HepG2 (cell line): ENCODE measurements at regions of chr6 and their contacts with region 1.

Region 1: DNA sequence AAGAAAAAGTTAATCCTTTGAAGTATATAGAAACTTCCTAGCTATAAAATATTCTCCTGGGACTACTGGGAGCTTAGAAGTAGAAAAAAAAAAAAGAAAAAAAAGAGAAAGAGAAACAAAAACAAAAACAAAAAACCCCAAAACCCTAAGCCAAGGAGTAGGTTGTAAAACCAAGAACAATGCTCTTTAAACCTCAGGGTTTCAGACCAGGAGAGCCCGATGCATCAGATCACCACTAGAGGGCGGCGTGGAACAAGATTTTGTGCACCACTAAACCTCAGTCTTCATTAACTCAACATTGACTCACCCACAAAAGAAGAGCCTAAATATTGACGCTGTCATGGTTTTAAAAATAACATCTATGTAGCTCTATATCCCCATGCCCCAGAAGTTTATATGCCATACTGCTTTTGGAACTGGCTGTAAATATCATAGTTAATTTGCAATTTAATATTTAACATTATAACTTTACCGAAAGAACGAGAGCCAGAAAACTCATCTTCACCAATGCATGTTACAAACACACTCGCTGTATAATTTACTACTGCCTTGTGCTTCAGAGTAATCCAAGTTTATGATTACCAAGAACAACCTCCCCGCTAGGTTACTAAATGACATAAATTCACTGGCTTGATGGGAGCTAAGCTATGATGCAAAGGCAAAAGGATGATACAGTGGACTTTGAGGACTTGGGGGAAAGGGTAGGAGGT is 19.2 kb downstream of the MCUR1 start:
- DNase-seq: peak; percentile 73
- ATAC-seq: peak; percentile 93
- H3K4me3 ChIP-seq: no peak overlapping the region
- H3K27ac ChIP-seq: no peak overlapping the region
- H3K4me1 ChIP-seq: no peaks in the 10 kb centered on the region
- H3K27me3 ChIP-seq: no peaks in the 10 kb centered on the region
- CTCF ChIP-seq: peak; percentile 91
- EP300 ChIP-seq: no peak
- POLR2A ChIP-seq: no peak
- RAD21 ChIP-seq: peak; percentile 73

Region 2: GRCh38 chr6:13859871-13860555 is 64.8 kb after region 1 on chr6:
- CTCF ChIA-PET with region 1: no interaction called
- POLR2A ChIA-PET with region 1: no interaction called
- in situ Hi-C with region 1: no loop called
- intact Hi-C with region 1: no loop called
- DNase-seq: no peak
- ATAC-seq: no peak
- H3K4me3 ChIP-seq: no peak overlapping the region
- H3K27ac ChIP-seq: no peak overlapping the region
- H3K4me1 ChIP-seq: peaks cover 13% of the 10 kb centered on the region
- H3K27me3 ChIP-seq: no peaks in the 10 kb centered on the region
- CTCF ChIP-seq: no peak
- EP300 ChIP-seq: no peak
- POLR2A ChIP-seq: no peak
- RAD21 ChIP-seq: no peak

Region 3: GRCh38 chr6:13873285-13874190 is 78.3 kb after region 1 on chr6:
- CTCF ChIA-PET with region 1: interaction called, 20 read pairs
- POLR2A ChIA-PET with region 1: no interaction called
- in situ Hi-C with region 1: no loop called
- intact Hi-C with region 1: loop called (anchors 1 kb)
- DNase-seq: peak; percentile 69
- ATAC-seq: peak; percentile 96
- H3K4me3 ChIP-seq: peak overlapping the region; percentile 23 to 64 (median 39); a peak in 5 of 6 replicates
- H3K27ac ChIP-seq: no peak overlapping the region
- H3K4me1 ChIP-seq: peaks cover 13% of the 10 kb centered on the region
- H3K27me3 ChIP-seq: peaks cover 0 to 17% of the 10 kb centered on the region in 2 experiments; a peak in 4 of 5 replicates
- CTCF ChIP-seq: peak; percentile 99
- EP300 ChIP-seq: no peak
- POLR2A ChIP-seq: no peak
- RAD21 ChIP-seq: peak; percentile 73

Region 4: GRCh38 chr6:13924949-13925881 is 130.0 kb after region 1 on chr6 and contains the start of gene RNF182:
- CTCF ChIA-PET with region 1: no interaction called
- POLR2A ChIA-PET with region 1: no interaction called
- in situ Hi-C with region 1: no loop called
- intact Hi-C with region 1: loop called (anchors 5 kb)
- DNase-seq: no peak
- ATAC-seq: peak; percentile 91
- H3K4me3 ChIP-seq: peak within 1 kb of the TSS; percentile 13 to 61 (median 24); a peak in 2 of 6 replicates
- H3K27ac ChIP-seq: no peak within 1 kb of the TSS
- H3K4me1 ChIP-seq: peaks cover 14% of the 10 kb centered on the region
- H3K27me3 ChIP-seq: peaks cover 4 to 48% of the 10 kb centered on the region in 2 experiments
- CTCF ChIP-seq: no peak
- EP300 ChIP-seq: no peak
- POLR2A ChIP-seq: no peak
- RAD21 ChIP-seq: no peak
- total RNA-seq, gene RNF182: not detected in 2 replicates

Region 5: DNA sequence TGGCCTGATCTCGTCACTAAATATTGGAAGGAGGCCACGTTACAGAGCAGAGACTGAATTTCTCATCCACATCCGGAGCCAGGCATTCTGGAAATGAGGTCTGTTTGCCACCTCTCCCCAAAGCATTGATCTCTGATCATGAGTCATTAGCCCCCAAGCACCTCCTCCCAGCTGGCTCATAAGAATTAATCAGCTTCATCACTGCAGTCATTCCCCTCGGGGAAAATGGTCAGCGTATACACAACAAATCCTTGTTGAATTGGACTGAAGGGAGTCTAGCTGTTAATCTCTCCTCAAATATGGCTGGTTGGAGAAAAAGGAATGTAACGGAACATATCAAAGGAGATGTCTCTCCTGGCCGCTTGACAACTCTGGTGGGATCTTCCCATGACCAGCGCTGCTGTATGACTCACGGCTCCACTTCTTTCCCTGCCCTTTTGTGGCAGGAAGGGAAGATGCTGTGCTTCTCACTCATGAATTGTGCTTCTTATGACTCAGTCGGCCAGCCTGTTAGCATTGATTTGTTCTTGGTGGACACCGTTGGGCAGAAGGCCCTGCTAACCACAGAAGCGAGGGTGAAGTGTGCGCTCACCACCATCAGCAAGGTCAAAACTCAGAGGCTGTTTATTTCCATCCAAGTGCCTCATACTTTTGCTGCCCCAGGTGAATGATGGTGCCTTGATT is 206.3 kb after region 1 on chr6:
- CTCF ChIA-PET with region 1: no interaction called
- POLR2A ChIA-PET with region 1: no interaction called
- in situ Hi-C with region 1: no loop called
- intact Hi-C with region 1: loop called (anchors 2 kb)
- DNase-seq: peak; percentile 19
- ATAC-seq: no peak; the same call in 2 of the 3 replicates
- H3K4me3 ChIP-seq: no peak overlapping the region
- H3K27ac ChIP-seq: no peak overlapping the region
- H3K4me1 ChIP-seq: no peaks in the 10 kb centered on the region
- H3K27me3 ChIP-seq: peaks cover 0 to 25% of the 10 kb centered on the region in 2 experiments; a peak in 3 of 5 replicates
- CTCF ChIP-seq: no peak
- EP300 ChIP-seq: no peak
- POLR2A ChIP-seq: no peak
- RAD21 ChIP-seq: no peak

Region 6: DNA sequence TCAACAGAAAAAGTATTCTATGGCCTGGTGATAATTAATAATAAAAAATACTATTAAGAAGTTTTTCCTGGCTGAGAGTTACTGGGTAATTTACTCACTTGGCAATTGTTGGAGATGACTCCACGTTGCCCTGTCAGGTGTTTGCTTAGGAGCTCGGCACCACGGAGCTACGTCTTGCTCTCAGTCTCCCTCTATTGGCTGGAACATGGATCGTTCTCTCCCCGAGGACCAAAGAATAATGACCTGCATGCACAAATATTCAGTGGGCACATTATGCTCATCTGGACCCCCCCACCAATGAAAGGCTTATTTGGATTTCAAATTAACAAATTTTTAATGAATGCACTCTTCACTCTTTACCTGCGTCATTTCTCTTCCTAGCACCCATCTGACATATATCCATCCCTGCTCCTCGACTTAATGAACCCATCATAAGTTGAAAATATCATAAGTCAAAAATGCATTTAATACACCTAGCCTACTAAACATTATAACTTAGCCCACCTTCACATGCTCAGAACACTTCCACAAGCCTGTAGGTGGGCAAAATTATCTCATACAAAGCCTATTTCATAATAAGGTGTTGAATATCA is 251.4 kb after region 1 on chr6:
- CTCF ChIA-PET with region 1: interaction called, 5 read pairs
- POLR2A ChIA-PET with region 1: no interaction called
- in situ Hi-C with region 1: loop called (anchors 10 kb)
- intact Hi-C with region 1: loop called (anchors 1 kb)
- DNase-seq: peak; percentile 30
- ATAC-seq: peak; percentile 82
- H3K4me3 ChIP-seq: no peak overlapping the region
- H3K27ac ChIP-seq: no peak overlapping the region
- H3K4me1 ChIP-seq: no peaks in the 10 kb centered on the region
- H3K27me3 ChIP-seq: peaks cover 0 to 14% of the 10 kb centered on the region in 2 experiments; a peak in 2 of 5 replicates
- CTCF ChIP-seq: peak; percentile 66
- EP300 ChIP-seq: no peak
- POLR2A ChIP-seq: no peak
- RAD21 ChIP-seq: peak; percentile 19; the same call in 1 of the 2 replicates

Region 7: DNA sequence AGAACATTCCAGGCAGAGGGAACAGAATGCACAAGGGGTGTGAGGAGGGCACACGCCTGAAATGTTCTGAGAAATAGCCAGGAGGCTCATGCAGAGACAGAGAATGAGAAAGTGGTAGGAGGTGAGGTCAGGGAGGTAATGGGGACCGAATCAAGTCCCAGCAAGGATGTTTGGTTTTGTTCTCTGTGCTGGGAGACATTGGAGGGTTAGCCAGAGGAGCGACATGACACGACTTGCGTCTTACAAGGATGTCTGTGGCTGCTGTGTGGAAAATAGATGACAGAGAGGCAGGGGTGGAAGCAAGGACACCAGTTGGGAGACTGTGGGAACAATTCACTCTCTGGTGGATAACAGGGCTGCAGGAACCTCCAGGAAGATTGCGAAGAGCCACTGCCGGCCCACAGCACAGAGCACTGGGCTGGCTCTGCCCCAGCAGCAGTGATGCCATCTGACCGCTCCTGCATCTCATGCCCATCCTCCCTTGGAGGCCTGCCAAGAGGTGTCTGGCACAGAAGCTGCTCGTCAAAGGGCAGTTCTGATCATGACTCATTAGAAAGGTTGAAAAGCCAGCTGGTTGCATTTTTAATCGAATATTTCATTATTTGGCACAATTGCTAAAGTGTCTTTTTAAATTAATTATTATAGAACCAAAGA is 264.7 kb after region 1 on chr6:
- CTCF ChIA-PET with region 1: no interaction called
- POLR2A ChIA-PET with region 1: no interaction called
- in situ Hi-C with region 1: loop called (anchors 10 kb)
- intact Hi-C with region 1: no loop called
- DNase-seq: no peak
- ATAC-seq: no peak
- H3K4me3 ChIP-seq: no peak overlapping the region
- H3K27ac ChIP-seq: no peak overlapping the region
- H3K4me1 ChIP-seq: no peaks in the 10 kb centered on the region
- H3K27me3 ChIP-seq: peaks cover 0 to 19% of the 10 kb centered on the region in 2 experiments; a peak in 3 of 5 replicates
- CTCF ChIP-seq: no peak
- EP300 ChIP-seq: no peak
- POLR2A ChIP-seq: no peak
- RAD21 ChIP-seq: no peak

Region 8: GRCh38 chr6:14066782-14067406 is 271.7 kb after region 1 on chr6:
- CTCF ChIA-PET with region 1: interaction called, 12 read pairs
- POLR2A ChIA-PET with region 1: no interaction called
- in situ Hi-C with region 1: no loop called
- intact Hi-C with region 1: loop called (anchors 1 kb)
- DNase-seq: peak; percentile 55
- ATAC-seq: peak; percentile 79
- H3K4me3 ChIP-seq: no peak overlapping the region
- H3K27ac ChIP-seq: no peak overlapping the region
- H3K4me1 ChIP-seq: no peaks in the 10 kb centered on the region
- H3K27me3 ChIP-seq: peaks cover 1 to 3% of the 10 kb centered on the region in 2 experiments; a peak in 1 of 5 replicates
- CTCF ChIP-seq: peak; percentile 76
- EP300 ChIP-seq: no peak
- POLR2A ChIP-seq: no peak
- RAD21 ChIP-seq: peak; percentile 49; the same call in 1 of the 2 replicates